ENCODE measurements at regions of chr7 and their contacts with region 1.

Region 1: DNA sequence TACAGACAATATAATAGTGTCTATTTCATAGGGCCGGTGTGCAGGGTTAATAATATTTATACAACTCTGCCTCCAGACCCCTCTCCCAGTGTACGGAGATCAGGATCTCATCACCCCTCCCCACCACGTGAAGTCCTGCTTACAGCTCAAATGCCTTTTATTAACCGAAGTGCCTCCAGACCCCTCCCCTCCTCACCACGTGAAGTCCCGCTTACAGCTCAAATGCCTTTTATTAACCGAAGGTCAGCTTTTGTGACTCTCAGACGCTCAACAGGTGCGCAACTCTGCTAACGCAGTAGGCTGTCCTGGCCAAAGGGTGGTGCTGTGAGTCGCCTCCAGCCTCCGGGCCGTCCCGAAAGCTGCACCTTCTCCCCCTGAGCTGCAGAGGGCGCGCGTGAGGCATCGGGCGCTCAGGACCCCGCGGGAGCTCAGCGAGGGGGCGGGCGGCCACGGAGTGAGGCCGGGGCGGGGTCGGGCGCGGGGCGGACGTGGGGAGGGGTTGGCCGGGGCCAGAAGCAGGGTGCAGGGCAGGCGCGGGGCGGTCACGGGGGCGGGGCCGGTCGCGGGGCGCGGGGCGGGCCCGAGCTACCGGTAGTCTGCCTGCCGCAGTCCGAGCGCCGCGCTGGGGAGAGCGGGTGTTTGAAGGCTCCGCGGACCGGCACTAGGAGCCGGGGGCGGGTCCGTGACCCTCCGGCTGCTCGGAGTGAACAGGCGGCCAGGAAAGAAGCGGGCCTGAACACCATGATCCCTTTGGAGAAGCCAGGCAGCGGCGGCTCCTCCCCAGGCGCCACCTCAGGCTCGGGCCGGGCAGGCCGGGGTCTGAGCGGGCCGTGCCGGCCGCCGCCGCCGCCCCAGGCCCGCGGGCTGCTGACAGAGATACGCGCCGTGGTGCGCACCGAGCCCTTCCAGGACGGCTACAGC is at the start of gene STK17A:
- DNase-seq: peak; percentile 98
- H3K4me3 Mint-ChIP-seq: peak within 1 kb of the TSS; percentile 93
- H3K27ac Mint-ChIP-seq: peak within 1 kb of the TSS; percentile 98
- H3K4me1 Mint-ChIP-seq: peaks cover 29% of the 10 kb centered on the region
- H3K27me3 Mint-ChIP-seq: peaks cover 22% of the 10 kb centered on the region
- total RNA-seq, gene STK17A: 30.8 and 33.9 TPM in 2 replicates

Region 2: DNA sequence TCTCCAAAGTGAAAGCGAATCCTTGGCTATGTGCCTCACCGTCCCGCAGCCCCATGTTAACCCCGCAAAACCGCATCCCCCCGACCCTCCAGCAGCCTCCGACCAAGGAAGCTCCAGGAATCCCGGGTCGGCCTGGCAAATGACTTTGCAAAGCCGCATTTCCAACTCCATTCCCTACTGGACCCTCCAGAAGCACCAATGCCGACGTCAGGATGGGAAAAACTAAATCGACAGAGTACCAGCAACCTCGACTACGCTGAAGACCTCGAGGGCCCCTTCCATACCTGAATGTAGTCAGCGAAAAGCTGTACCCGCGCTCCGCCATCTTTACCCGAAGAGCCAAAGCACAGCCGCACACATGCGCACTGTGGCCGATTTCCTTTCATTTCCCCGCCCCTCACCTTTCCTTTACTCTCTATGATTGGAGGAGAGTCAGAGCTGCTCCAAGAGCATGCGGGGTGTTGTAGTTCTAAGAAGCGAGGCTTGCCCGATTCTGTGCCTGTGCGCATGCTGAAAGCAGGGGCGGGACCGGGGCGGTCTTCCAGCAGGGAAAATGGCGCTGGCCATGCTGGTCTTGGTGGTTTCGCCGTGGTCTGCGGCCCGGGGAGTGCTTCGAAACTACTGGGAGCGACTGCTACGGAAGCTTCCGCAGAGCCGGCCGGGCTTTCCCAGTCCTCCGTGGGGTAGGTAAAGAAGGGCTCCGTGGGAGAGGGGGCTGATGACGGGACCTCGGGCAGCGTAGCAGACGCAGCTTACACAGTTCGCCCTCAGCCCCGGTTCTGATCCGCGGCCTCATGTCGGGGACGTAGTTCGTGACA is 650.7 kb before region 1 on chr7 and contains the starts of genes MRPL32 and PSMA2:
- intact Hi-C with region 1: loop called (anchors 5 kb)
- DNase-seq: peak; percentile 99
- H3K4me3 Mint-ChIP-seq: peak within 1 kb of the TSS; percentile 97
- H3K27ac Mint-ChIP-seq: peak within 1 kb of the TSS; percentile 99
- H3K4me1 Mint-ChIP-seq: peaks cover 53% of the 10 kb centered on the region
- H3K27me3 Mint-ChIP-seq: no peaks in the 10 kb centered on the region
- total RNA-seq, gene MRPL32: 81.6 and 89.1 TPM in 2 replicates
- total RNA-seq, gene PSMA2: 202 and 209 TPM in 2 replicates

Region 3: DNA sequence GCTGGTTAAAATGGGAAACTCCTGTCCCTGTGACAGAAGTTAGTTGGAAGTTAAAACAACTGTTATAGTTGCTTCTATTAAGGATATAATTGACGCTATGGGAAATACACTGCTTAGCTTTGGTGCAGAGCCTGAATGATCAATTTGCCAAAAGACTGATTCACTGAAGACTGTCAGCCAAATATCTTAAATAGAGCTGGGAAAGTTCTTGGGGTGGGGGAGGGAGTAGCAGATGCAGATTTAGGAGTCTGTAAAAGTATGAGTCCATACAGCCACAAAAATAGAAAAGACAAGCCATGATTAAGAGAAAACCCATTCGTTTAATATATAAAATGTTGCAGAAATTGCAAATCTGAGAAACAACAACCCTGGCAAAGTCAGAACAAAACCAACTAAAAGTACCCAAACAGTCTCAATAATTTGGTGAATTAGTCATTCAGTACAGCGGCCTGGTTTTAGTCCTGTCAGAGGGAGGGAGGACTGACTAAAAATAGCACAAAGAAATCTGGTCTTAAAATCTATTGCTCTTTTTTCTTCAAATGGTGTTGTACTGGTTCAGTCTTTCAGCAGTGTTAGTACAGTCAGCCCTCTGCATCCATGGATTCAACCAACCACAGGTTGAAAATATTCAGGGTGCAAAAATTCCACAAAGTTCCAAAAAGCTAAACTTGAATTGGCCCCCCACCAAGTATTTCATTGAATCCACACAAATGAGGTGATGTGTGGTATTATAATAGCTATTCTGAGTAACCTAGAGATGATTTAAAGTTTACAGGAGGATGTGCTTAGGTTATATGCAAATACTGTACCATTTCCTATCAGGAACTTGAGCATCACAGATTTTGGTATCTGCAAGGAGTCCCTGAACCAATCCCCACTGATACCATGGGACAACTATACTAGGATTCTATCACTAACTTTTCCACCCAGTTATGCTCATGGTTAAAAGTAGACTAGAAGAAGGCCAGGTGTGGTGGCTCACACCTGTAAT is 30.1 kb after region 1 on chr7:
- intact Hi-C with region 1: loop called (anchors 1 kb)
- DNase-seq: peak; percentile 59
- H3K4me3 Mint-ChIP-seq: peak overlapping the region; percentile 29
- H3K27ac Mint-ChIP-seq: peak overlapping the region; percentile 74
- H3K4me1 Mint-ChIP-seq: peaks cover 39% of the 10 kb centered on the region
- H3K27me3 Mint-ChIP-seq: no peaks in the 10 kb centered on the region

Region 4: DNA sequence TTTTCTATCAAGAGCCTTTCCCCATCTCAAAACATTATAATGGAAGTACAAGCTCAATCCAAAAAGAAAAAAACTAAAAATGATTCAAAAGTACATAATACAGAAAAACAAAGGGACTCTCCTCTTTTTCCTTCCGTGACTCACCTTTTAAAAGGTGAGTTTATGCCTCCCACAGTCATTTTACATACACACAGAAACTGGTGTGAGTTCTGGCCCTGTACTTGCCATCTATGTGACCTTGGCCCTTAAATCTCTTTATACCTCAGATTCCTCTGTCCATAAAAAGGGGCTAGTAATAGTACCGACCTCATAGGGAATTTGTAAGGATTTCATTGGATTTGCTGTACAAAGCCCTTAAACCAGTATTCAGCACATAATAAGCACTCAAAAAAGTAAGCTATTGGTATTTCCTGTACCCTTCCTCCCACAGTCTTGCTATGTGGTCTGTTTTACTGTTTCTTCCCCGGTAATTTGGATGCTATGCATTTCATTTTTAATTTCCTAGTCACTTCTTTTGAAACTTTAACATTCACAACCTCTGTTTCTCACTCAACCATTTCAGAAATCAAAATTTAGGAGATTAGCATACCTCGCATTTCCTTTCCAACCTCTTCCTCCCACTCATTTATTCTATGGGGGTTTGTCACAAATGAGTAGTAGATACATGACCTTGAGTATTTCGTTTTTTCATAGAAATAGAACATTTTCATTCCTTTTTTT is 39.1 kb after region 1 on chr7:
- intact Hi-C with region 1: loop called (anchors 1 kb)
- DNase-seq: no peak
- H3K4me3 Mint-ChIP-seq: peak overlapping the region; percentile 59
- H3K27ac Mint-ChIP-seq: peak overlapping the region; percentile 61
- H3K4me1 Mint-ChIP-seq: peaks cover 45% of the 10 kb centered on the region
- H3K27me3 Mint-ChIP-seq: no peaks in the 10 kb centered on the region

Region 5: GRCh38 chr7:43700059-43700501 is 117.3 kb after region 1 on chr7:
- intact Hi-C with region 1: loop called (anchors 1 kb)
- DNase-seq: no peak
- H3K4me3 Mint-ChIP-seq: no peak overlapping the region
- H3K27ac Mint-ChIP-seq: no peak overlapping the region
- H3K4me1 Mint-ChIP-seq: peaks cover 48% of the 10 kb centered on the region
- H3K27me3 Mint-ChIP-seq: no peaks in the 10 kb centered on the region

Region 6: DNA sequence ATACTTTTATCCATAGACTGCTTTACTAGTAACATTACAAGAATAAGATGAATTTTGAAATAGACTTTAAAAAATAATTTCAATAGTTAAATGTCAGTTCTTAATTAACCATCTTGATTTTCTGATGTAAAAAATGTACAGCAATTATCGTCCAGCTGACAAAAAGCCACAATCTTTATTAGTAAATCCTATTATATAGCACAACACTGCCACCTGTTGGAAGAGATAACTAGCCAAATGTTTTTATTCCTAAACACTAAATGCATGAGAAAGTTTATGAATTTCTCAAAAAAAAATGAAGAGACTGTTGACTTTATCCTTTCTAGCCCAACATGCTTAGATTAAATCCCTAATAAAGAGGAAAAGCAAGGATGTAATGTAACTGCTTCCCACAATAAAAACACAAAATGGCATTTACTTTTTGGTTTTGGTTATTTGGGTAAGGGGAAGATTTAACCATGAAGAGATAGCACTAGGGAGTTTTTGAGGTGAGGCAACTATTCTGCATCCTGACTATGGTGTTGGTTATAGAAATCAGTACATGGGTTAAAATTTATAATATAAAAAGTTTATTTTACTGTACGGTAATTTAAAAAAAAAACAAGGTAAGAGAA is 138.5 kb after region 1 on chr7:
- intact Hi-C with region 1: loop called (anchors 1 kb)
- DNase-seq: peak; percentile 70
- H3K4me3 Mint-ChIP-seq: no peak overlapping the region
- H3K27ac Mint-ChIP-seq: no peak overlapping the region
- H3K4me1 Mint-ChIP-seq: peaks cover 33% of the 10 kb centered on the region
- H3K27me3 Mint-ChIP-seq: no peaks in the 10 kb centered on the region

Region 7: GRCh38 chr7:43729214-43729923 is 146.6 kb after region 1 on chr7 and contains the start of gene COA1:
- intact Hi-C with region 1: loop called (anchors 1 kb)
- DNase-seq: peak; percentile 95
- H3K4me3 Mint-ChIP-seq: peak within 1 kb of the TSS; percentile 94
- H3K27ac Mint-ChIP-seq: peak within 1 kb of the TSS; percentile 89
- H3K4me1 Mint-ChIP-seq: peaks cover 26% of the 10 kb centered on the region
- H3K27me3 Mint-ChIP-seq: peaks cover 3% of the 10 kb centered on the region
- total RNA-seq, gene COA1: 79.0 and 79.3 TPM in 2 replicates

Region 8: DNA sequence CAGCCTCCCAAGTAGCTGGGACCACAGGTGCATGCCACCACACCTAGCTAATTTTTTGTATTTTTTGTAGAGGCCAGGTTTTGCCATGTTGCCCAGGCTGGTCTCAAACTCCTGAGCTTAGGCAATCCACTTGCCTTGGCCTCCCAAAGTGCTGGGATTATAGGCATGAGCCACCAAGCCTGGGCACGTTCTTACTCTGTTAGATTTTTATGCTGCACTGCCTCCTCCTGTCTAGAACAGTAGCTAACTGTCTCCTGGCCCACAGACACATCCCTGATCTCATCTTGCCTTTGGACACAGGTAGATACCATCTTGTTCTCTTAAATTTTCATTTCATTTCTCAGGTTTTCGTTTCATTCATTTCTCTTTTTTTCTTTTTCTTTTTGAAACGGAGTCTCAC is 216.8 kb after region 1 on chr7:
- intact Hi-C with region 1: no loop called
- DNase-seq: no peak
- H3K4me3 Mint-ChIP-seq: no peak overlapping the region
- H3K27ac Mint-ChIP-seq: no peak overlapping the region
- H3K4me1 Mint-ChIP-seq: no peaks in the 10 kb centered on the region
- H3K27me3 Mint-ChIP-seq: no peaks in the 10 kb centered on the region